ENCODE measurements at regions of chr10 and their contacts with region 1.

Region 1: DNA sequence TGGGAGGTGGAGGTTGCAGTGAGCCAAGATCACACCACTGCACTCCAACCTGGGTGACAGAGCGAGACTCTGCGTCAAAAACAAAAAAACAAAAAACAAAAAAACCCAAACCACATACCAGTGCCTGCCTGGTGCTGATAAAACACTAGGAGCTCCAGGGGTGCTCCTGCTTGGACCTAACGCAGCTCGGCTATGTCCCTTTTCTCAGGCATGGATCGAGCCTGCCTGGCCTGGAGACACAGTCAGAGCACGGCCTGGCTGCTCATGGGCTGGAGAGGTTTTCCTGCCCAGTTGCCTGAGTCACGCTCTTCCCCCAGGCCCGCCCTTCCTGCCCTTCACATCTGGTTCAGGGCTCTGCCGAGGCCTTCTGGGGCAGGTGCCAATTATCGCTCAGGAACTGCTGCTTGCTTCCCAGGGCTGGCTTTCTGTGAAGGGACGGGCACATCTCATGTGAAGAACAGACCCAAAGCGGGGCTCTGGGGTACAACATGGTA is 12.6 kb upstream of the NPFFR1 start:
- DNase-seq: no peak
- H3K4me3 ChIP-seq: no peak overlapping the region
- H3K27ac ChIP-seq: no peak overlapping the region
- H3K4me1 ChIP-seq: peaks cover 0 to 7% (median 2%) of the 10 kb centered on the region in 4 experiments; a peak in 4 of 7 replicates
- H3K27me3 ChIP-seq: no peaks in the 10 kb centered on the region
- CTCF ChIP-seq: no peak
- EP300 ChIP-seq: no peak
- POLR2A ChIP-seq: no peak
- RAD21 ChIP-seq: no peak

Region 2: GRCh38 chr10:70145666-70146488 is 150.6 kb before region 1 on chr10:
- CTCF ChIA-PET with region 1: no interaction called
- POLR2A ChIA-PET with region 1: no interaction called
- DNase-seq: peak in 1 of 2 experiments; percentile 81
- H3K4me3 ChIP-seq: peak overlapping the region; percentile 51 to 70 (median 59)
- H3K27ac ChIP-seq: peak overlapping the region; percentile 62; the same call in 1 of the 2 replicates
- H3K4me1 ChIP-seq: peaks cover 3 to 9% (median 6%) of the 10 kb centered on the region in 4 experiments; a peak in 3 of 7 replicates
- H3K27me3 ChIP-seq: peaks cover 0 to 8% (median 4%) of the 10 kb centered on the region in 4 experiments; a peak in 3 of 7 replicates
- CTCF ChIP-seq: peak; percentile 53 to 93 (median 54)
- EP300 ChIP-seq: peak in 1 of 2 experiments; percentile 3; a peak in 1 of 3 replicates
- POLR2A ChIP-seq: peak in 1 of 2 experiments; percentile 53; a peak in 2 of 3 replicates
- RAD21 ChIP-seq: peak in 1 of 2 experiments; percentile 38; a peak in 2 of 4 replicates

Region 3: DNA sequence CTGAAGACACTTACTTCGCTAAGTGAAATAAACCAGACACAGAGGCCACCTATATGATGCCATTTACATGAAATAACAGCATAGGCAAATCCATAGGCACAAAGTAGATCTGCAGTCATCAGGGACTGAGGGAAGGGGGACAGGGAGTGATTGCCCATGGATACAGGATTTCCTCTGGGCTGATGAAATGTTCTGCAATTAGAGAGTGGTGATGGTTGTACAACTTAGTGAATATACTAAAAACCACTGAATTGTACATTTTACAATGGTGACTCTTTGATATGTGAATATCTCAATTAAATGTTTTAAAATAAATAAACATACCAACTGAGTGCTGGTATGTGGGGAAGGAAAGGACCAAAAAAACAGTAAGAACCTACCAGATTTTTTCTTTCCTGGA is 83.6 kb before region 1 on chr10:
- CTCF ChIA-PET with region 1: no interaction called
- POLR2A ChIA-PET with region 1: no interaction called
- DNase-seq: no peak
- H3K4me3 ChIP-seq: no peak overlapping the region
- H3K27ac ChIP-seq: no peak overlapping the region
- H3K4me1 ChIP-seq: no peaks in the 10 kb centered on the region
- H3K27me3 ChIP-seq: no peaks in the 10 kb centered on the region
- CTCF ChIP-seq: no peak
- EP300 ChIP-seq: no peak
- POLR2A ChIP-seq: no peak
- RAD21 ChIP-seq: no peak

Region 4: GRCh38 chr10:70283445-70284399 is 12.7 kb before region 1 on chr10 and contains the start of gene NPFFR1:
- CTCF ChIA-PET with region 1: interaction called, 17 read pairs
- POLR2A ChIA-PET with region 1: no interaction called
- DNase-seq: peak in 1 of 2 experiments; percentile 78
- H3K4me3 ChIP-seq: peak within 1 kb of the TSS; percentile 29 to 65 (median 46)
- H3K27ac ChIP-seq: no peak within 1 kb of the TSS
- H3K4me1 ChIP-seq: no peaks in the 10 kb centered on the region
- H3K27me3 ChIP-seq: peaks cover 14 to 36% (median 23%) of the 10 kb centered on the region in 4 experiments
- CTCF ChIP-seq: peak in 2 of 3 experiments; percentile 10 to 16; a peak in 2 of 4 replicates
- EP300 ChIP-seq: no peak
- POLR2A ChIP-seq: no peak
- RAD21 ChIP-seq: peak; percentile 12 to 21; a peak in 2 of 4 replicates
- total RNA-seq, gene NPFFR1: 0.06 TPM in 1 of 2 replicates, not detected in the other

Region 5: DNA sequence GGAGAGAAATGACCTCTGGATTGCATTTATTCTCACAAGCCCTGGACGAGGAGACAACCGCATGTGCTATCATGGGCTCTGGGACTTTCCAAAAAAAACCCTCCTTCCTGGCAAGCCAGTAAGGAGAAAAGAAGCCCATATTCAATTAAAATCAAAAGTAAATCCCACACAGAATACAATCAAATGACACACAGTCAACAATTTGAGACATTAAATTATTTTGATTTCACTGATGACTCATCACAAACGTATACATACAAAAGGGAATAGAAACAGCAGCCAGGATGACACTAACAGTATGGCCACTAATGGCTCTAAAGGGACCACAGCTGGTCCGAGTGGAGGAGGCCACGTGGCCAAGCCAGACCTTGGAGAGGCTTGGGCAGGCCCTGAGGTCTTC is 61.1 kb after region 1 on chr10:
- CTCF ChIA-PET with region 1: no interaction called
- POLR2A ChIA-PET with region 1: no interaction called
- DNase-seq: no peak
- H3K4me3 ChIP-seq: no peak overlapping the region
- H3K27ac ChIP-seq: no peak overlapping the region
- H3K4me1 ChIP-seq: no peaks in the 10 kb centered on the region
- H3K27me3 ChIP-seq: no peaks in the 10 kb centered on the region
- CTCF ChIP-seq: no peak
- EP300 ChIP-seq: no peak
- POLR2A ChIP-seq: no peak
- RAD21 ChIP-seq: no peak